ENCODE measurements at regions of chr12 and their contacts with region 1.

Region 1: DNA sequence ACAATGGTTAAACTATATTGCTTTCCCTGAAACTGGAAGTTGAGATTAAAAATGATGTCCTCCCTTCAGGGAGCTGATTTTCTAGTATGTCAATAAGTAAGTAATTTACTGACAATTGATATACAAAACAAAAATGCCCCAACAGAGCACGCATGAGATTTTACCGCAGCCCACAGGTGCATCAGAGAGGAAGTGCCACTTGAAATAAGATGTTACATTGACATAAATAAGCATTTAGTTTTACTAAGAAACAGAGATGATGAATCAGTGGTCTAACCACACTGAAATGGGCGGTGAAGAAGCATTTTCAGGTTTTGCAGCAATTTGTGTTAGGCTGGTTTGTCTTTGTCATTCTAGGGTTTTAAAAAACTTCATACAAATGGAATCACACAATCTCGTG is 8.8 kb upstream of the CLECL1 start:
- DNase-seq: peak; percentile 70 to 95 (median 94)
- H3K4me3 ChIP-seq: peak overlapping the region in 1 of 7 experiments; percentile 17
- H3K27ac ChIP-seq: no peak overlapping the region
- H3K4me1 ChIP-seq: peaks cover 20 to 53% (median 42%) of the 10 kb centered on the region in 4 experiments
- H3K27me3 ChIP-seq: no peaks in the 10 kb centered on the region

Region 2: GRCh38 chr12:9634177-9634803 is 107.4 kb before region 1 on chr12:
- CTCF ChIA-PET with region 1: interaction called, 29 read pairs
- POLR2A ChIA-PET with region 1: no interaction called
- DNase-seq: peak; percentile 68 to 78 (median 70)
- H3K4me3 ChIP-seq: no peak overlapping the region
- H3K27ac ChIP-seq: no peak overlapping the region
- H3K4me1 ChIP-seq: peaks cover 9 to 16% (median 12%) of the 10 kb centered on the region in 4 experiments
- H3K27me3 ChIP-seq: no peaks in the 10 kb centered on the region

Region 3: GRCh38 chr12:9782547-9783382 is 41.0 kb after region 1 on chr12:
- CTCF ChIA-PET with region 1: no interaction called
- POLR2A ChIA-PET with region 1: no interaction called
- DNase-seq: no peak
- H3K4me3 ChIP-seq: no peak overlapping the region
- H3K27ac ChIP-seq: no peak overlapping the region
- H3K4me1 ChIP-seq: peaks cover 0 to 2% (median 0%) of the 10 kb centered on the region in 4 experiments
- H3K27me3 ChIP-seq: no peaks in the 10 kb centered on the region

Region 4: DNA sequence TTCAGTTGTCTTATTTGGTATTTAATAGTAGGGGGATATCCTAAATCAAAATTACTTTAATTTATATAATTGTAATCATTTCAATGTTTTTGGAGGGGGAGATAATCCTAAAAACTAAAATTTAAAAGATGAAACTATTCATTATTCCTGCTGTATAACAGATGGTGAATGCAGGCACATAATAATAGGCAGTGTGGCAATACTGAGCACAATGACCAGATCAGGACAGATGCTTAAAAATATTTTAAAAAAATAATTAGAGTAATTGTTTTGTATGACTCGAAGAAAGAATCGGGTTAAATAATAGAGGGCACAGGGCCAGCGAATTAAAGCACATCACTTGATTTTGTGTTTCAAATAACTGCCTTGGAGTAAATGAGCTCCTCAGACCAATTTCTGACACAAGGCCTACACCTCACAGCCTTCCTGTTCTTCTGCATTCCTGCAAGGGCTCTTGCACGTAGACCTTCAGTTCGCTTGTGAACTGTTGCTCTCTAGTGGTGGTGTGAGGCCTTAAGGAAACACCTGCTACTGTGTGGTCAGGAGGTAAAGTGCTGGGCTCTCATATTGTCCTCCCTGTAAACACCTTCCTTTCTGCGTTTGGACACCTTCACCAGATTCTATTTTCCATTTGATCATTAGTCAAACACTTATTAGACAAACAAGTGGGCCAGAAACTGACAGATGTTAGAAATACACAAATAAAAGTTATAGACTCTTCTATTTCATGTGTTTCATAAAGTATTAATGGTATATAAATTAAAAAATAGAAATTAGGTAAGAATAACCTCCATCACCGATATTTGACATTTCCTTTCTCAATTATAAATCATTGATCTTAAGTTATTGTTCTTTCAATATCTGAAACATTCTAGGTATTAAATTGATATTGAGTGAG is 56.2 kb after region 1 on chr12:
- CTCF ChIA-PET with region 1: interaction called, 437 read pairs
- POLR2A ChIA-PET with region 1: no interaction called
- DNase-seq: peak; percentile 91 to 96 (median 93)
- H3K4me3 ChIP-seq: no peak overlapping the region
- H3K27ac ChIP-seq: peak overlapping the region in 1 of 2 experiments; percentile 27
- H3K4me1 ChIP-seq: peaks cover 29 to 59% (median 47%) of the 10 kb centered on the region in 4 experiments
- H3K27me3 ChIP-seq: no peaks in the 10 kb centered on the region